KBM-7 (cell line): ENCODE measurements at regions of chr5 and their contacts with region 1.

Region 1: DNA sequence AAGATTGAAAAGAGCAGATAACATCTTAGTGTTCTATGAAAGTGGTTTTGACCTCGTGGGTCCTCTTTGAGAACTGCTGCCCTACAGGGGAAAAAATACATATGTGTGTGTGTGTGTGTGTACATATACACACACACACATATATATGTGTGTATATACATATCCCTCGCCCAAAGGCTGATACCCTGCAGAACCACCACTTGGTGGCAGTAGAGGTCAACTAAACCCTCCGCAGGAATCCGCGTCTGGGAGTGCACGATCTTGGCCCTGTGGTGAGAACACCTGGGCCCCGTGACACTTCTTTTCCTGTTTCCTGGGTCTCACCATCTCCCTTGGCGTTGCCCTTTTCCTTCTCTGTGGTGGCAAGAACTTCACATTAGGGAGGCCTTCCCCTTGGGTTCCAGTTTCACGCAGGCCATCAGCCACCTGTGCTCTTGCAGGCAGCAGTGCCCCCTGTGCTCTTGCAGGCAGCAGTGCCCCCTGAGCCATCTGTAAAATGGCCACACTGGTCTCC is 8.2 kb downstream of the IL9 start:
- DNase-seq: peak; percentile 74

Region 2: GRCh38 chr5:136037001-136037705 is 149.7 kb after region 1 on chr5:
- in situ Hi-C with region 1: no loop called
- DNase-seq: peak; percentile 93

Region 3: DNA sequence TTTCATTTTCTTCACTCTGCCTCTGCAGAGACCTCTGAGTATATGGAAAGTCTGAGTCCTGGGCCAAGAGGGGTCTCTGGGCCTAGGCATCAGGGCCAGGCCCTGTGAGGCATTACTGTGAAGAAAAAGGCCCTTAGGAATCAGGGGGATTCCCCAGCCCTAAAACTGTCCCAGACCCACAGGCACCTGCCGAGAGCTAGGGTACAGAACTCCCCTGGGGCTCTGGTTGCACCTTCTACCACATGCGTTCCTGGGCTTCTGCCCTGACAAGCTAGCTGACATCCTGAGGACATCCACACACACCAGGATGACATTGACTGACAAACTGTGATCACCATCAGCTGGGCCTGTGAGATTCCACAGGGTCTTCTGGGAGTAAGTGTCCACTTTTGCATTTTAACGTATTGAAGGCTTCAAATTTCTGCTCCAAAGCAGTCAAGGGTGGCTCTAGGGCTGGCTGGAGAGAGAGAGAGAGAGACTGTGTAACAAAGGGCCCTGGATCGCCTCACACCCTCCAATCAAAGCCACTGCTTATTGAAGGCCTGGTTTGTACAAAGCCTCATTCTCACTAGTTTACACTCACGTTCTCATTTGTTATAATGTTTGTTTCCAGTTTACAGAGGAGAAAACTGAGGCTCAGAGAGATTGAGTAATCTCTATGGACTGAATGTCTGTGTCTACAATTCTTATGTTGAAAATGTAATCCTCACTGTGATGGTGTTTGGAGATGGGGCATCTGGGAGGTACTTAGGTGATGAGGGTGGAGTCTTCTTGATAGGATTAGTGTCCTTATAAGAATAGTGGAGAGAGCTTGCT is 186.5 kb after region 1 on chr5:
- in situ Hi-C with region 1: loop called (anchors 10 kb)
- DNase-seq: no peak

Region 4: DNA sequence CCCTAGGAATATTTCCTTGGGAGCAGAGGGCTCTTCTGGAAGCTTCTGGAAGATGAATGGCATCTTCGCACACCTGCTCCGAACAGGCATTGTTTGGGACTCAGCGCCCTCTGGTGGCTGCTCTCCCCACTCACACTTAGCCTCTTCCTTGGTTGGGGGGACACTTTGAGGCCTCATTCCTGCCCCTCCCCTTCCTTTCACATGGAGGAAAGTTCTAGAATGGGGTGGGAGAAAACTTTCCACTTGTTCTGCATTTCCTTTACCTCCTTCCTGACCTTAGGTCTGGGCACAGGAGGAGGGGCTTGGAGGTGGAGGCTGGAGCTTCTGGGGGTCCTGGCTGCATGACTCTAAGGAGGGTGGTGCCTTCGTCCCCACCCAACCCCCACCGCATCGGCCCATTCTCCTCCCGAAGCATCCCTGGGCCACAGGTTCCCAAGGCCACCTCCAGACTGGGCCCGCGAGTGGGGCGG is 324.9 kb after region 1 on chr5:
- in situ Hi-C with region 1: loop called (anchors 25 kb)
- DNase-seq: peak; percentile 56

Region 5: GRCh38 chr5:136584474-136584873 is 697.1 kb after region 1 on chr5:
- in situ Hi-C with region 1: no loop called
- DNase-seq: no peak